Pancreas (tissue), 10 donors: ENCODE measurements at regions of chr10 and their contacts with region 1.

Region 1: DNA sequence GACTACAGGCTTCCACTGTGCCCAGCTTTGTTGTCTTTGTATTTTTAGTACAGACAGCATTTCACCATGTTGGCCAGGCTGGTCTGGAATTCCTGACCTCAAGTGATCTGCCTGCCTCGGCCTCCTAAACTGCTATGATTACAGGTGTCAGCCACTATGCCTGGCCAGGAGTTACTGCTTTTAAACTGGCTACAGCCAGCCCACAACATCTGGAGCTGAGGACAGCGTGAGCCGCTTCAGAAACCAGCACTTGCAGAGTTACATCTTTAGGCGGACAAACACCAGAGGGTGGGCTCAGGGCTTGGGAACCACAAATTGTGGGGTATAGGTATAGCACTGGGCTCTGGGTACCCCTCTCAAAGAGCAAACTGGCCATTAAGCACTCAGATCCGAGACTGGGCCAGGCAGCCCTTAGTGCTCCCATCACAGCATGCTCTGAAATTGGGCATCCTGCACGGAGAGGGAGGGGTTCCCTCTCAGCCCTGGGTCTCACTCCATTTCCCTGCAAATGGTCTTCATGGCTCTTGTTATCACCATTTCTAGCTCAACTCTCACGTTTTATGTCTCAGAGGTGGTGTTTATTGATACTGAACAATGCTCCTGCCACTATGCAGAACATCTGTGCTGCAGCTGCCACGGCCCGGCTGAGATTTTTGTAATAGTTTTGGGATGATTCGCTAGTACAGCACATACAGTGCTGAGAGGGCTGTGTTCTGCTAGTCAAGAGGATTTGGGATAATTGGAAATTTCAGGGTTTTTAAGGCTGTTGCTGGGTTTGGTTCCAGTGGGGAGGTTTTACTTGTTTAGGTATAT is 146.4 kb upstream of the LYZL2 start:
- DNase-seq: no peak
- ATAC-seq: peak in 1 of 4 donors; percentile 49
- H3K4me3 ChIP-seq: no peak overlapping the region
- H3K27ac ChIP-seq: no peak overlapping the region
- H3K4me1 ChIP-seq: no peaks in the 10 kb centered on the region
- H3K27me3 ChIP-seq: no peaks in the 10 kb centered on the region
- CTCF ChIP-seq: no peak

Region 2: DNA sequence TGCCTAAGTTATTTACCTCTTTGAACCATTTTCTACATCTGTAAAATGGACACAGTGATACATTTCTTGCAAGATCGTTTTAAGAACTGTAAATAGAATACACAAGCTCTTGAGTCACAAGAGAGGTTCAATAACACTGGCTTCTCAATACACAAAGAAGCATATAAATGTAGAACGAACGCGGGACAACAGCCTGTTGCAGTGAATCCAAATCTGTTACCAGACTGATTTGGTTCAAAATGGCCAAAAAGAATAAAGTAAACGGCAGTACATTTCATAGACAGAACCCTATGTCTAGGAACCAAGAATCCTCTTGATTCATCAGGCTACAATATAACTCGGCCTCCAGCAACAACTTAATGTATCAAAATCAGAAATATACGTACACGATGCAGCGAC is 427.6 kb before region 1 on chr10:
- intact Hi-C with region 1: no loop called
- DNase-seq: no peak
- ATAC-seq: peak in 1 of 4 donors; percentile 22
- H3K4me3 ChIP-seq: peak overlapping the region; percentile 51 to 87 (median 78)
- H3K27ac ChIP-seq: peak overlapping the region in 1 of 4 donors; percentile 50
- H3K4me1 ChIP-seq: peaks cover 12 to 18% (median 16%) of the 10 kb centered on the region in 3 donors
- H3K27me3 ChIP-seq: no peaks in the 10 kb centered on the region
- CTCF ChIP-seq: no peak

Region 3: GRCh38 chr10:31508882-31509281 is 732.9 kb after region 1 on chr10:
- intact Hi-C with region 1: loop called in 1 of 3 experiments (anchors 10 kb)
- DNase-seq: peak in 1 of 6 donors; percentile 34
- ATAC-seq: no peak
- H3K4me3 ChIP-seq: no peak overlapping the region
- H3K27ac ChIP-seq: no peak overlapping the region
- H3K4me1 ChIP-seq: no peaks in the 10 kb centered on the region
- H3K27me3 ChIP-seq: no peaks in the 10 kb centered on the region
- CTCF ChIP-seq: no peak